ENCODE measurements at regions of chr11 and their contacts with region 1.

Region 1: GRCh38 chr11:7694235-7694634 is 12.0 kb downstream of the OVCH2 start:
- DNase-seq: no peak
- H3K4me3 ChIP-seq: no peak overlapping the region
- H3K27ac ChIP-seq: no peak overlapping the region
- H3K4me1 ChIP-seq: no peaks in the 10 kb centered on the region
- H3K27me3 ChIP-seq: peaks cover 26% of the 10 kb centered on the region
- CTCF ChIP-seq: no peak

Region 2: DNA sequence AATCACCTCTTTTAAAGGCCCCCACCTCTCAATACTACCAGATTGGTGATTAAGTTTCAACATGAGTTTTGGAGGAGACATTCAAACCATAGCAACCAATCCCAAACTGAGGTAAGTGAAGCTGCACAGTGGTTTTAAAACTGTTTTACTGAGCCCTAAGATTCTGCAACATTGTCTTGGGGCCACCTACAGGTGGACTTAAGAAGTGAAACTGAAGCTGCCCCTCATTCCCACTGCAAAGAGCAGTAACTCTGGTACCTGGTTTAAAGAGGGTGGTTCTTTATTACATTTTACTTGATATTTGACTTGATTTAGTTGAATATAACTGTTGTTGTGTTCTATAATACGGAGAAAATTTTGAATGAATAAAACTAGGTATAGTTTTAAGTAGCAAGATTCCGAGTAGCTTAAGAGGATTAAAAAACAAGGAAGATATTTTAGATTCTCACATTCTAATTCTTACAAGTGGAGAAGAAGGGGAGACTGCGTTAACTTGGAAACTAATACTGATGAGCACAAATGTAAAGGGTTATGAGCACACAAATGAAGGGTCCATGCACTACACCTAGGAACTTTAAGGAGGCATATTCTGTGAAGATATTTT is 415.8 kb before region 1 on chr11:
- CTCF ChIA-PET with region 1: no interaction called
- POLR2A ChIA-PET with region 1: no interaction called
- intact Hi-C with region 1: no loop called
- DNase-seq: peak; percentile 31
- H3K4me3 ChIP-seq: no peak overlapping the region
- H3K27ac ChIP-seq: no peak overlapping the region
- H3K4me1 ChIP-seq: no peaks in the 10 kb centered on the region
- H3K27me3 ChIP-seq: no peaks in the 10 kb centered on the region
- CTCF ChIP-seq: peak; percentile 68

Region 3: DNA sequence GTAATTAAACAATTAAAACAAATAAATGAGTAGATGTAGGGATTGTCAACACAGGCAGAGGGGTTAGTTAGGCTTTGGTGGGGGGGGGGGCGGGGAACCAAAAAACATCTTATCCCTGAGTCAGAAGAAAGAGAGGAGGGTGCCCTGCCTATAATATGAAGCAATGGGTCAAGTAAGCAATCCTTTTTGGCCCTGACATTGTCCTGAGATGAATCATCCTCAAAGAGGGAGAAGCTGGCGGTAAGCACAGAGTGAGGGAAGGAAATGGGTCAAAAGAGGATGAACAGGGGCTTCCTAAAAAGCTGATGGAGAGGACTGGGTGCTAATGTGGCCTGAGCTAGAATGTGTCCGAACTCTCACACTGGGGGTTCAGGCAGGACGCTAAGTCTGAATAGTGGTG is 204.2 kb before region 1 on chr11:
- CTCF ChIA-PET with region 1: no interaction called
- POLR2A ChIA-PET with region 1: no interaction called
- intact Hi-C with region 1: no loop called
- DNase-seq: no peak
- H3K4me3 ChIP-seq: no peak overlapping the region
- H3K27ac ChIP-seq: no peak overlapping the region
- H3K4me1 ChIP-seq: no peaks in the 10 kb centered on the region
- H3K27me3 ChIP-seq: peaks cover 2% of the 10 kb centered on the region
- CTCF ChIP-seq: no peak

Region 4: DNA sequence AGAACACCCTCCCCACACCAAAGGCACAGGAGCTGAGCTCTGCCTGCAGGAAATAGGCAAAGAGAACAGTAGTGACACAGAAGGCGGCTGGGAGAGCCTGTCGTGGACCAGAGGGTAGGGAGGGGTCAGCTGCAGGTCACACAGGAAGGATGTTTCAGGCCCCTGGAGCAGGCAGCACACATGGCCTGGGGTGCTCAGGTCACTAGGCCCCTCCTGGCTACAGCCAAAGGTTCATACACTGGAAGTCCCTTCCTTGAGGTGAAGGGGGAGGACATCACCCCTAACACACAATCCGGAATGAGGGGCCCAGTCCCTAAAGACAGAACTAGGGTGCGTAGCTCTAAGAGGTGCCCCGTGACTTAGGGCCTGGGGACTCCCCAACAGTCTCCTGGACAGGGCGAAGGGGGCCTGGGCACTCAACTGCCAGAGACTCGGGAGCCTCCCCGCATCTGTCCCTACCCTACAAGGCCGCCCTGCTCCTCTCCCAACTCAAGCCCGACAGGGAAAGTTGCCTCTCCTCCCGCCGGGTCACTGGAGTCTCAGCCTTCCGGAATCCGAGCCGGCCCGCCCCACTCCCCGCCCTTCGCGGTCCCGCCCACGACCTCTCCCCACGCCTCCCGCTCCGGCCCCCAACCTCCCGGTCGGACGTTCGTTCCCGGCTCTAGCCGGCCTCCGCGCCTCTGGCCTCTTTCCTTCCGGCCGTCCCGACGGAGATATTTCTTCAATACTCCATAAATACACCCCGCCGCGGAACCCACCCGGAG is 21.1 kb before region 1 on chr11 and contains the start of gene CYB5R2:
- CTCF ChIA-PET with region 1: interaction called, 21 read pairs
- POLR2A ChIA-PET with region 1: no interaction called
- intact Hi-C with region 1: no loop called
- DNase-seq: no peak
- H3K4me3 ChIP-seq: peak within 1 kb of the TSS; percentile 17
- H3K27ac ChIP-seq: no peak within 1 kb of the TSS
- H3K4me1 ChIP-seq: no peaks in the 10 kb centered on the region
- H3K27me3 ChIP-seq: peaks cover 22% of the 10 kb centered on the region
- CTCF ChIP-seq: no peak
- total RNA-seq, gene CYB5R2: 6.2 and 6.9 TPM in 2 replicates

Region 5: GRCh38 chr11:8886322-8886721 is 1192.1 kb after region 1 on chr11:
- CTCF ChIA-PET with region 1: no interaction called
- POLR2A ChIA-PET with region 1: no interaction called
- intact Hi-C with region 1: no loop called
- DNase-seq: no peak
- H3K4me3 ChIP-seq: no peak overlapping the region
- H3K27ac ChIP-seq: no peak overlapping the region
- H3K4me1 ChIP-seq: no peaks in the 10 kb centered on the region
- H3K27me3 ChIP-seq: no peaks in the 10 kb centered on the region
- CTCF ChIP-seq: no peak

Region 6: DNA sequence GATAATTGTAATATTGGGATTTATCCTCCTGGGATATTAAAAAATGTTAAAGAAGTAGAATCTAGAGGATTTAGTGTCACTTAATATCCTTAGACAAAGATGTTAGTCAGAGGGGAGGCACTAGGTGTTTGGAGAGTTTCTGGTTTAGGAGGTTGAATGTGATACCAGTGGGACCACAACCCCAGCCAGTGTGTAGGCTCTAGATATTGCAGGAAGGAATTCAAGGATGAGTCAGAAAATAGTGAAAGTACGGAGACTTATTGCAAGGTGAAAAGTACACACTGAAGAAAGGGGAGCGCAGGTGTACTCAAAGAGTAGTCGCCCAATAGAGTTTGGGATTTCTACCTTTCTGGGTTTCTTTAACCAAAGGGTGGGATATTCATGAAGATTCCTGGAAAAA is 1625.8 kb after region 1 on chr11:
- CTCF ChIA-PET with region 1: no interaction called
- POLR2A ChIA-PET with region 1: no interaction called
- intact Hi-C with region 1: no loop called
- DNase-seq: no peak
- H3K4me3 ChIP-seq: no peak overlapping the region
- H3K27ac ChIP-seq: no peak overlapping the region
- H3K4me1 ChIP-seq: peaks cover 5% of the 10 kb centered on the region
- H3K27me3 ChIP-seq: no peaks in the 10 kb centered on the region
- CTCF ChIP-seq: no peak

Measured in A673 (cell line).